Psoas muscle (tissue), 8 donors: ENCODE measurements at regions of chr22 and their contacts with region 1.

Region 1: GRCh38 chr22:46303347-46303965 is 6.8 kb downstream of the GTSE1 start:
- DNase-seq: peak in 1 of 2 donors; percentile 12
- ATAC-seq: no peak
- H3K4me3 ChIP-seq: no peak overlapping the region
- H3K27ac ChIP-seq: no peak overlapping the region
- H3K4me1 ChIP-seq: no peaks in the 10 kb centered on the region
- H3K27me3 ChIP-seq: no peaks in the 10 kb centered on the region
- CTCF ChIP-seq: no peak

Region 2: GRCh38 chr22:45664136-45664646 is 639.3 kb before region 1 on chr22:
- intact Hi-C with region 1: loop called in 1 of 2 experiments (anchors 10 kb)
- DNase-seq: no peak
- ATAC-seq: no peak
- H3K4me3 ChIP-seq: no peak overlapping the region
- H3K27ac ChIP-seq: no peak overlapping the region
- H3K4me1 ChIP-seq: no peaks in the 10 kb centered on the region
- H3K27me3 ChIP-seq: no peaks in the 10 kb centered on the region
- CTCF ChIP-seq: no peak

Region 3: GRCh38 chr22:46201059-46201757 is 102.2 kb before region 1 on chr22:
- intact Hi-C with region 1: no loop called
- DNase-seq: no peak
- ATAC-seq: no peak
- H3K4me3 ChIP-seq: no peak overlapping the region
- H3K27ac ChIP-seq: no peak overlapping the region
- H3K4me1 ChIP-seq: peaks cover 5% of the 10 kb centered on the region
- H3K27me3 ChIP-seq: no peaks in the 10 kb centered on the region
- CTCF ChIP-seq: no peak